Dorsolateral prefrontal cortex (tissue), 120 donors: ENCODE measurements at regions of chr5 and their contacts with region 1.

Region 1: GRCh38 chr5:54844905-54845566 is 140.4 kb downstream of the ESM1 start:
- DNase-seq: no peak
- H3K4me3 ChIP-seq: peak overlapping the region in 57 of 59 donors; percentile 4 to 65 (median 40)
- H3K27ac ChIP-seq: peak overlapping the region in 41 of 59 donors; percentile 2 to 76 (median 48)
- H3K27me3 ChIP-seq: no peaks in the 10 kb centered on the region
- CTCF ChIP-seq: peak; percentile 64 to 95 (median 79)

Region 2: GRCh38 chr5:54745599-54745998 is 99.4 kb before region 1 on chr5:
- intact Hi-C with region 1: loop called in 1 of 2 experiments (anchors 5 kb)
- DNase-seq: no peak
- H3K4me3 ChIP-seq: no peak overlapping the region
- H3K27ac ChIP-seq: peak overlapping the region in 1 of 59 donors; percentile 60
- H3K27me3 ChIP-seq: no peaks in the 10 kb centered on the region
- CTCF ChIP-seq: no peak